ENCODE measurements at regions of chr10 and their contacts with region 1.

Region 1: GRCh38 chr10:114631666-114632417 is 26.2 kb downstream of the ABLIM1 start:
- DNase-seq: peak; percentile 50 to 56
- ATAC-seq: peak; percentile 56 to 67 (median 61)
- H3K4me3 ChIP-seq: peak overlapping the region; percentile 67
- H3K27ac ChIP-seq: peak overlapping the region; percentile 46
- H3K4me1 ChIP-seq: peaks cover 38% of the 10 kb centered on the region
- H3K27me3 ChIP-seq: peaks cover 0 to 59% (median 10%) of the 10 kb centered on the region in 3 donors
- CTCF ChIP-seq: no peak

Region 2: DNA sequence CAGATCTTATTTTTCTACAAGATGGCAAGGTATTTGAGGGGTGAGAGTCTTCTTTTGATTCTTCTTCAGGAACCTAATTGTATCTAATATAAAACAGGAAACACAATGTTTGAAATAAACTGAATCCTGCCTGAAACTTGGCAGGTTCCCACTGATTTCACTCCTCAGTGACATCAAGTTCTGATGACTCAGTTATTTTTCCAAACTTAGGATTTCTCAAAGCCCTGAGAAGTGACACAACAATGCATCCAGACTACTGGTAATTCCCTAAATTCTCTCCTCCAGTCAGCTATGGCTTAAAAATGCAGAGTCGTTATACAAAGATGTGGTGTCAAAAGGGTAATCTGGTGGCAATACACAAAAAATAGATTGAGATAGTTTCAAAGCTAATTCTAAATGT is 54.7 kb before region 1 on chr10:
- intact Hi-C with region 1: no loop called
- DNase-seq: no peak
- ATAC-seq: peak in 3 of 4 donors; percentile 37 to 70 (median 39)
- H3K4me3 ChIP-seq: no peak overlapping the region
- H3K27ac ChIP-seq: peak overlapping the region; percentile 46
- H3K4me1 ChIP-seq: peaks cover 19% of the 10 kb centered on the region
- H3K27me3 ChIP-seq: no peaks in the 10 kb centered on the region
- CTCF ChIP-seq: no peak

Region 3: GRCh38 chr10:114714281-114714741 is 82.5 kb after region 1 on chr10:
- intact Hi-C with region 1: no loop called
- DNase-seq: no peak
- ATAC-seq: peak in 3 of 4 donors; percentile 38 to 74 (median 47)
- H3K4me3 ChIP-seq: no peak overlapping the region
- H3K27ac ChIP-seq: peak overlapping the region; percentile 24
- H3K4me1 ChIP-seq: peaks cover 17% of the 10 kb centered on the region
- H3K27me3 ChIP-seq: no peaks in the 10 kb centered on the region
- CTCF ChIP-seq: no peak

Region 4: GRCh38 chr10:114779803-114780609 is 148.2 kb after region 1 on chr10:
- intact Hi-C with region 1: loop called in 1 of 2 experiments (anchors 10 kb)
- DNase-seq: no peak
- ATAC-seq: no peak
- H3K4me3 ChIP-seq: no peak overlapping the region
- H3K27ac ChIP-seq: no peak overlapping the region
- H3K4me1 ChIP-seq: no peaks in the 10 kb centered on the region
- H3K27me3 ChIP-seq: no peaks in the 10 kb centered on the region
- CTCF ChIP-seq: no peak